ENCODE measurements at regions of chrX and their contacts with region 1.

Region 1: DNA sequence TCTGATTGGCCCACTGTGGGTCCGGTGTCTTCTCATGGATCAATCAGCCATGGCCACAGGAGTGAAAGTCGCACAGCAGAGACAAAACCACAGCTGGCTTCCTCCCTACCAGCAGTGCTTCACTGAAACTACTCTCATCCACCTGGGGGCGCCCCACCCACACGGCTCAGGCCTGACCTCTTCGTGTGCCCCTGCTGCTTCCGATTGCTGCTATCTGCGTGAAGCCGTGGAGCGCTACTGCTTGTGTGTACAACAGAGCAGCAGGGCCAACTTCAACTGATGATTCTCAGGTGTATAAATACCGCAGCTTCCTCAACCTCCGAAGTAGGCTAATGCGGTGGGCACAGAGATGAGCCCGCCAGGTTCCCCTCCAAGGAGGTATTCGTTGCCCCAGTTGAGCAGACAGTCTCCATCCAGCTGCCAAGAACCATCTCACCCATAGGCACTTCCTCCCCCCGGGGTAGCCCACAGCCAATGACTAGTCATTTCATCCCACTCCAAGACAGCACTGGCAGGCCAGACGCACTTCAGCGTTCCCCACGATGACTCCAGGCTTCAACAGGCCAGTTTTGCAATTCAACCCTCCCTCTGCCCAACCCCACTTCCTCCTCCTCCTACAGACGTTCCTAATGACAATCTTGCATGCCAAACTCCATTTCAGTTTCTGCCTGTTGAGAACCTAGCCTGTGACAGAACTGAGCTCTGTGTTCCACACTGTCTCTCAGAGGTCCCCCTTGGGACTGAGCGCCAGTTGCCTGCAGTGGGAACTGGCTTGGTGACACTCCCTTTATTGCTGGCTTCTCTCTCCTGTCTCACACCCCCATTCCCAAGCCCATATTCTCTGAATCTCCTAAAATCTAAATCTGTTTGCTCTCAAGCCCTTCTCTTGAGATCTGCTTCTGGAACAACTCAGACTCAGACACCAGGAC is 41.3 kb upstream of the ATP6AP2 start:
- DNase-seq: peak; percentile 32
- H3K4me3 ChIP-seq: no peak overlapping the region
- H3K27ac ChIP-seq: no peak overlapping the region
- H3K4me1 ChIP-seq: no peaks in the 10 kb centered on the region
- H3K27me3 ChIP-seq: peaks cover 8% of the 10 kb centered on the region
- CTCF ChIP-seq: peak in 1 of 2 donors; percentile 13

Region 2: GRCh38 chrX:40591126-40591525 is 51.6 kb after region 1 on chrX:
- CTCF ChIA-PET with region 1: no interaction called
- dilution Hi-C with region 1: no loop called
- in situ Hi-C with region 1: no loop called
- intact Hi-C with region 1: no loop called
- DNase-seq: no peak
- H3K4me3 ChIP-seq: no peak overlapping the region
- H3K27ac ChIP-seq: no peak overlapping the region
- H3K4me1 ChIP-seq: no peaks in the 10 kb centered on the region
- H3K27me3 ChIP-seq: peaks cover 3% of the 10 kb centered on the region
- CTCF ChIP-seq: no peak

Region 3: GRCh38 chrX:40647307-40648197 is 108.1 kb after region 1 on chrX and contains the start of gene CXorf38:
- CTCF ChIA-PET with region 1: interaction called, 15 read pairs
- dilution Hi-C with region 1: no loop called
- in situ Hi-C with region 1: no loop called
- intact Hi-C with region 1: loop called (anchors 1 kb)
- DNase-seq: peak; percentile 88
- H3K4me3 ChIP-seq: peak within 1 kb of the TSS; percentile 52 to 89 (median 77)
- H3K27ac ChIP-seq: peak within 1 kb of the TSS; percentile 62
- H3K4me1 ChIP-seq: peaks cover 17% of the 10 kb centered on the region
- H3K27me3 ChIP-seq: no peaks in the 10 kb centered on the region
- CTCF ChIP-seq: no peak
- total RNA-seq, gene CXorf38: 18.0 to 19.8 TPM

Measured in mammary epithelial cell (primary cell).